ENCODE measurements at regions of chrX and their contacts with region 1.

Region 1: GRCh38 chrX:23832721-23833120 is 49.7 kb downstream of the SAT1 start:
- DNase-seq: no peak
- ATAC-seq: no peak
- H3K4me3 ChIP-seq: no peak overlapping the region
- H3K27ac ChIP-seq: no peak overlapping the region
- H3K4me1 ChIP-seq: no peaks in the 10 kb centered on the region
- H3K27me3 ChIP-seq: no peaks in the 10 kb centered on the region
- CTCF ChIP-seq: no peak

Region 2: DNA sequence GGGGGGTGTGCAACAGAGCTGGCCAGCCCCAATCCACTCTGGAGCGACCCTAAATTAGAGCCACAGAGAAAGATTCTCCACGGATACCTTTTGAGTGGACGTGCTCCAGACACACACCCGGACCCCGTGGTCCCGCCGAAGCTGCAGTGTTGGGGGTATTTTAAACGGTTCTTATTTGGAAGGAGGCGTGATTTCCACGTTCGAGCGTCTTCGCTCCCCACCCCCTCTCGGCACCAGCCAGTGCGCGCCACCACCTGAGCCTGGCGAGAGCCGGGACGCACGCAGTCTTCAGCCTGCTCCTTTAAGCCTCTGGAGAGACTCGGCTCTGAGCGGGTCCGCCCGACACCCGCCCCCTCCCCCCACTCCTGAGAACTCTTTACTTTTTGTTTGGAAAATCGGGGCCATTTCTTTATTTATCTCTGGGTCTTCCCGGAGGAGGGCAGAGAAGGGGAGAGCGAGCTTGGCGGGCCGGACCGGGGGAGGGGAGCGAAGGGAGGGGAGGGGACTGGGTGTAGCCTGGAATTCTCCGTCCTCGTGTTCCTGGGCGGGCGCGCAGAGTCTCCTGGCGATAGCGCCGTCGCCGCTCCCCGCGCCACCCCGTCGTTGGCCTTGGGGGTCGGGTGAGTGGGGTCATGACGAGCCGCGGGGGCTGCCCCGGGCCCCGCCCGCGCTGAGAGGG is 498.7 kb before region 1 on chrX:
- CTCF ChIA-PET with region 1: no interaction called
- POLR2A ChIA-PET with region 1: no interaction called
- intact Hi-C with region 1: no loop called
- DNase-seq: no peak
- ATAC-seq: no peak
- H3K4me3 ChIP-seq: no peak overlapping the region
- H3K27ac ChIP-seq: no peak overlapping the region
- H3K4me1 ChIP-seq: no peaks in the 10 kb centered on the region
- H3K27me3 ChIP-seq: peaks cover 79% of the 10 kb centered on the region
- CTCF ChIP-seq: no peak

Region 3: GRCh38 chrX:23662187-23662586 is 170.5 kb before region 1 on chrX:
- CTCF ChIA-PET with region 1: no interaction called
- POLR2A ChIA-PET with region 1: no interaction called
- intact Hi-C with region 1: no loop called
- DNase-seq: no peak
- ATAC-seq: no peak
- H3K4me3 ChIP-seq: no peak overlapping the region
- H3K27ac ChIP-seq: no peak overlapping the region
- H3K4me1 ChIP-seq: peaks cover 7% of the 10 kb centered on the region
- H3K27me3 ChIP-seq: no peaks in the 10 kb centered on the region
- CTCF ChIP-seq: no peak

Region 4: GRCh38 chrX:23845351-23845817 is 12.7 kb after region 1 on chrX:
- CTCF ChIA-PET with region 1: no interaction called
- POLR2A ChIA-PET with region 1: no interaction called
- intact Hi-C with region 1: loop called (anchors 1 kb)
- DNase-seq: no peak
- ATAC-seq: peak; percentile 89
- H3K4me3 ChIP-seq: no peak overlapping the region
- H3K27ac ChIP-seq: no peak overlapping the region
- H3K4me1 ChIP-seq: peaks cover 8% of the 10 kb centered on the region
- H3K27me3 ChIP-seq: no peaks in the 10 kb centered on the region
- CTCF ChIP-seq: no peak

Measured in PC-3 (cell line).